H1 (cell line): ENCODE measurements at regions of chr14 and their contacts with region 1.

Region 1: GRCh38 chr14:53979747-53980642 is 23.4 kb upstream of the BMP4 start:
- DNase-seq: peak in 1 of 2 experiments; percentile 49
- H3K4me3 ChIP-seq: peak overlapping the region in 1 of 4 experiments; percentile 2; a peak in 1 of 8 replicates
- H3K27ac ChIP-seq: no peak overlapping the region
- H3K4me1 ChIP-seq: peaks cover 6 to 33% (median 26%) of the 10 kb centered on the region in 4 experiments; a peak in 6 of 7 replicates
- H3K27me3 ChIP-seq: peaks cover 0 to 12% (median 4%) of the 10 kb centered on the region in 4 experiments; a peak in 4 of 7 replicates
- CTCF ChIP-seq: no peak
- EP300 ChIP-seq: no peak
- POLR2A ChIP-seq: no peak
- RAD21 ChIP-seq: no peak

Region 2: DNA sequence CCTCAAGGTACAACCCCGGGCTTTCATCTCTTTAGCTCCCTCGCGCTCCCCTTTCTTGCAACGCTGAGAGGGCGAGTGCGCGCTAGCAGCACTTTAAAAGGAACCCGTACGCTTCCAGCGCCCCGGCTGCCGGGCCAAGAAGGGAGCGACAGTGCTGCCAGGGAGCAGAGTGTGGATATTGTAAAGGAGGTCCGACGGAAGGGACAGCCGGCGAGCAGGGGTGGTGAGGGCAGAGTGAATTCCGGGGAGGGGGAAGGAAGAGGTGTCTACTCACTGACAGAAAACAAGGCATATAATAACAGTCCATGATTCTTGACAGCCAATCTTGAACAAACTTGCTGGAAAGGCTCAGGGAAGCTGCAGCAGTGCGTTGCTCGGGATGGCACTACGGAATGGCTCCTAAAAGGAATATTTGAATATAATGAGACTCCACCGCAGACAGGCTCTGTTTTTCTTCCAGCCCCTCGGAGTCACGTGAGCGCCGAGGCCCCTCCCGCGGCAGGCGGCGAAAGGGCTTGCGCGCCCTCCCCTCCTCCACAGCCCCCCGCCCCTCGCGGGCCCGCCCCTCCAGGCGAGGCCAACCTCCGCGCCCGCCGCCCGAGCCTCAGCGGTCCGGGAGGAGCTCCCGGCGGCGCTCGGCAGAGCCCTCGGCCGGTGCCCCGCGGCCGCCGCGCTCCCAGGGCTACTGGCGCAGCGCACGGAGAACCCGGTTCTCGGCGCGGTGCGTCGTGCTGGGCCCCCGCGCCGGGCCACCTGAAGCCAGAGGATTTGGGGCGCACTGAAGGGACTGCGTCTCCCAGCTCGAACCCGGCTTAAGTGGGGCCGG is 26.8 kb before region 1 on chr14:
- CTCF ChIA-PET with region 1: interaction called, 16 read pairs
- POLR2A ChIA-PET with region 1: interaction called, 7 read pairs
- DNase-seq: peak in 1 of 2 experiments; percentile 86
- H3K4me3 ChIP-seq: peak overlapping the region; percentile 54 to 86 (median 78)
- H3K27ac ChIP-seq: no peak overlapping the region
- H3K4me1 ChIP-seq: peaks cover 5 to 9% (median 7%) of the 10 kb centered on the region in 4 experiments
- H3K27me3 ChIP-seq: peaks cover 26 to 78% (median 67%) of the 10 kb centered on the region in 4 experiments
- CTCF ChIP-seq: no peak
- EP300 ChIP-seq: no peak
- POLR2A ChIP-seq: no peak
- RAD21 ChIP-seq: no peak; a peak in 1 of 4 replicates

Region 3: DNA sequence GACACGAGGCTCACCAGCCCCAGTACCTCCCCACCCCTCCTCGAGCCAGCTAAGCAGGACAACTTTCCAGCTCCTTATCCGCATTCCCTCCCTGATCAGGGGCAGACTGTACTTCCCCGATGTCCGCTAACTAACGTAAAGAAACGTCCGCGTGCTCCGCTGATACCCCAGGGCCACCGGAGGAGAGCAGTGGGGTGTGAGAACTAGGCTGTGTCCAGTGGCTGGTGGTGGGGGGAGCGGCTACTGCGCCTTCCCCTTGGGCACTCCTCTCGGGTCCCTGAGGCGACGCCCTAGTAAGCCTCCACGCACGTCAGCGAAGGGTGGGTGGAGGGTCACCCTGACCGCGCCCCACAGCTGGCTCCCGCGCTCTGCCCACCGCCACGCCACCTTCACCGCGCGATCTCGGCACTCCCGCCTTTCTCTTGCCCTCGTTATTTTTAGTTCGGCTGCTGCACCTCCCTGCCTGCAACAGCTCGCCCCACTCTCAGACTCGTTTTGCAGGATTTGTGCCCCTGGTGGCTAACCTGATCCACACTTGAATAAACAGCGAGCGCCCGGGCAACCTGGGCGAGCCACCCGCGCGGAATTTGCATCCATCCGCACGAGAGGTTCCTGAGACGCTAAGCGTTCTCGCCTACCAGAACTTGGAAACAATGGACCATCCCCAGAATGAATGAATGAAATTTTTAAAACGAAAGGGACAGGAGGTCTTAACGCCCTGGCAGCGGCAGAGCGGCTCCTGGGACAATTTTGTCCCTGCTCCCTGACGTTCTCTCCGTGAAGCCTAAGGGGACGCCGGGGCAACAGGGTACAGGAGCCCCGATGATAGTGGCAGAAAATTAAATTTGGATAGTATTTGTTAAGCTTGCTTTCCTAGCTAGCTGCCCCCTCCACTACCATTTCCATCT is 16.4 kb before region 1 on chr14:
- CTCF ChIA-PET with region 1: interaction called, 11 read pairs
- POLR2A ChIA-PET with region 1: interaction called, 5 read pairs
- DNase-seq: peak in 1 of 2 experiments; percentile 59
- H3K4me3 ChIP-seq: peak overlapping the region; percentile 26 to 58 (median 48)
- H3K27ac ChIP-seq: no peak overlapping the region
- H3K4me1 ChIP-seq: peaks cover 2 to 21% (median 12%) of the 10 kb centered on the region in 4 experiments
- H3K27me3 ChIP-seq: peaks cover 14 to 35% (median 32%) of the 10 kb centered on the region in 4 experiments
- CTCF ChIP-seq: peak; percentile 16 to 37 (median 21)
- EP300 ChIP-seq: no peak
- POLR2A ChIP-seq: no peak
- RAD21 ChIP-seq: peak; percentile 16 to 34; a peak in 3 of 4 replicates